ENCODE measurements at regions of chr11 and their contacts with region 1.

Region 1: DNA sequence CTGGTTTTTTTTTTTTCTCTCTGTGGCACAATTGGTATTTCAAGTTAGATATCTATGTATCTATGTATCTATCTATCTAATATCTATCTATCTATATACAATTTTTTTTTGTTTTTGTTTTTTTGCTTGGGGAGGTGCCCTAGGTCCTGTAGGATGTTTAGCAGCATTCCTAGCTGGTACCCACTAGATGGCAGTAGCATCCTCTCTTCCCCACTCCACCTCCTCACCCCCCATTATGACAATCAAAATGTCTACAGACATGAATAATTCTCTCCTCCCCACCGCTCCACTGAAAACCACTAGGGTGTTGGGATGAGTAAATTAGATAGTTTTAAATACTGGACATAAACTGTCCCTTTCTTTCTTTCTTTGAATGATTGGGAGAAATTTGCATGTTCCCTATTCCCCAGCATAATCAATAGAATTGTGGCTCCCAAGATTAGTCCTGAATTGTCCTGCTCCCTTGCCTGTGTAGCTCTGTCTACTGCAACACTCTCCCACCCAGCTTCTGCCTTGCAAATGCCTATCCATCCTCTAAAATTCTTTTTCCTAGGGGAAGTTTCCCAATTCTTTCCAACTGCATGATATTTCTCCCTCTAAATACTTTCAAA is 1152.4 kb downstream of the LRRC4C start:
- DNase-seq: no peak
- H3K4me3 Mint-ChIP-seq: no peak overlapping the region
- H3K27ac Mint-ChIP-seq: no peak overlapping the region
- H3K4me1 Mint-ChIP-seq: no peaks in the 10 kb centered on the region
- H3K27me3 Mint-ChIP-seq: no peaks in the 10 kb centered on the region

Region 2: DNA sequence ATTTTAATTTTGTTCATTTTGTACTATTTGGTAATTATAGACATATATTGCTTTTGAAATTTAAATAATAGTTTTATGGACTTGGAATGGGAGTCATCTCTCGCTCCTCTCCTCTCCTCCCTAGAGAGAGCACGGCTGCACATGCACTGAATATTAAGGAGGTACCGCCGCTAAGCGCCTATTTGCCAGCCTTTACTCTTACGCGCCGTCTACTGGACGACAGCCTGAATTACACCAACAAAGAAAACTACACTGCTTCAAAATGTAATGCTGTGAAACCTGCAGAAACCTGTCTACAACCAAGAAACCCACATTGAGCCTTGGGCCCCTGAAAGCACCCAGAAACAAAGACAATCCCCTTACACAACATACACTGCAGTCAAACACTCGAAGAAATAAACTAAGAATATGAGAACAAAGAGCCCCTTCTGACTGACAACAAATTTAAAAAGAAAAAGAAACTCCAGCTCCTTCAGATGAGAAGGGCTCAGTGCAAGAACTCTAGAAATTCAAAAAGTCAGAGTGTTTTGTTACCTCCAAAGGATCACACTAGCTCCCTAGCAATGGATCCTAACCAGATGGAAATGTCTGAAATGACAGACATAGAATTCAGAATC is 415.2 kb after region 1 on chr11:
- CTCF ChIA-PET with region 1: no interaction called
- intact Hi-C with region 1: loop called (anchors 2 kb)
- DNase-seq: peak; percentile 5
- H3K4me3 Mint-ChIP-seq: no peak overlapping the region
- H3K27ac Mint-ChIP-seq: no peak overlapping the region
- H3K4me1 Mint-ChIP-seq: no peaks in the 10 kb centered on the region
- H3K27me3 Mint-ChIP-seq: no peaks in the 10 kb centered on the region

Region 3: GRCh38 chr11:41201156-41201555 is 894.1 kb after region 1 on chr11:
- CTCF ChIA-PET with region 1: no interaction called
- intact Hi-C with region 1: loop called (anchors 2 kb)
- DNase-seq: peak; percentile 32
- H3K4me3 Mint-ChIP-seq: no peak overlapping the region
- H3K27ac Mint-ChIP-seq: no peak overlapping the region
- H3K4me1 Mint-ChIP-seq: no peaks in the 10 kb centered on the region
- H3K27me3 Mint-ChIP-seq: no peaks in the 10 kb centered on the region